ENCODE measurements at regions of chr2 and their contacts with region 1.

Region 1: GRCh38 chr2:177148477-177149154 is 64.0 kb upstream of the HNRNPA3 start:
- DNase-seq: peak; percentile 61 to 75
- ATAC-seq: peak; percentile 99
- H3K4me3 ChIP-seq: peak overlapping the region; percentile 48
- H3K27ac ChIP-seq: no peak overlapping the region
- H3K4me1 ChIP-seq: peaks cover 9% of the 10 kb centered on the region; the same call in 1 of the 3 replicates
- CTCF ChIP-seq: peak; percentile 85
- EP300 ChIP-seq: no peak
- POLR2A ChIP-seq: no peak
- RAD21 ChIP-seq: peak; percentile 63 to 68

Region 2: DNA sequence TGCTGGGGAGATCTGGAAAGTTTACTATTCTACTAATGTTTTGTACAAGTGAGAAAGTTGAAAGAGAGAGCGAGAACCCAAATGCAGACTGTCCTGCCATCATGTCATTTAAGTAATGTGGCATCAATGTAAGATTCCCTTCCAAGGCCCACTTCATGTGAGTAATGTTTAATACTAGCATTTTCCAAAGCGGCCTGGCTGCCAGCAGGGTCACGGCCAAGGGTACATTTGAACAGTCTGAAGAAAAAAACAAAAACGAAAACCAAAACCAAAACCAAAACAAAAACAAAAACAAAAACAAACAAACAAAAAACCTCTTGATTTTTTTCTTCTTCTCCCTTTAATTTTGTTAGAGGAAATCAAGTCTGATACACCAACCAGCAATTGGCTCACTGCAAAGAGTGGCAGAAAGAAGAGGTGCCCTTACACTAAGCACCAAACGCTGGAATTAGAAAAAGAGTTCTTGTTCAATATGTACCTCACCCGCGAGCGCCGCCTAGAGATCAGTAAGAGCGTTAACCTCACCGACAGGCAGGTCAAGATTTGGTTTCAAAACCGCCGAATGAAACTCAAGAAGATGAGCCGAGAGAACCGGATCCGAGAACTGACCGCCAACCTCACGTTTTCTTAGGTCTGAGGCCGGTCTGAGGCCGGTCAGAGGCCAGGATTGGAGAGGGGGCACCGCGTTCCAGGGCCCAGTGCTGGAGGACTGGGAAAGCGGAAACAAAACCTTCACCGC is 1029.8 kb before region 1 on chr2:
- CTCF ChIA-PET with region 1: interaction called, 12 read pairs
- POLR2A ChIA-PET with region 1: no interaction called
- DNase-seq: peak; percentile 63 to 79
- ATAC-seq: peak; percentile 31 to 46; a peak in 3 of 6 replicates
- H3K4me3 ChIP-seq: peak overlapping the region; percentile 30; the same call in 2 of the 3 replicates
- H3K27ac ChIP-seq: peak overlapping the region in 1 of 2 experiments; percentile 30; a peak in 1 of 6 replicates
- H3K4me1 ChIP-seq: 0 out of 3 replicates have a peak, but pooled peaks cover 3% of the 10 kb centered on the region
- CTCF ChIP-seq: peak; percentile 75
- EP300 ChIP-seq: no peak
- POLR2A ChIP-seq: no peak
- RAD21 ChIP-seq: peak; percentile 22; a peak in 1 of 5 replicates

Region 3: DNA sequence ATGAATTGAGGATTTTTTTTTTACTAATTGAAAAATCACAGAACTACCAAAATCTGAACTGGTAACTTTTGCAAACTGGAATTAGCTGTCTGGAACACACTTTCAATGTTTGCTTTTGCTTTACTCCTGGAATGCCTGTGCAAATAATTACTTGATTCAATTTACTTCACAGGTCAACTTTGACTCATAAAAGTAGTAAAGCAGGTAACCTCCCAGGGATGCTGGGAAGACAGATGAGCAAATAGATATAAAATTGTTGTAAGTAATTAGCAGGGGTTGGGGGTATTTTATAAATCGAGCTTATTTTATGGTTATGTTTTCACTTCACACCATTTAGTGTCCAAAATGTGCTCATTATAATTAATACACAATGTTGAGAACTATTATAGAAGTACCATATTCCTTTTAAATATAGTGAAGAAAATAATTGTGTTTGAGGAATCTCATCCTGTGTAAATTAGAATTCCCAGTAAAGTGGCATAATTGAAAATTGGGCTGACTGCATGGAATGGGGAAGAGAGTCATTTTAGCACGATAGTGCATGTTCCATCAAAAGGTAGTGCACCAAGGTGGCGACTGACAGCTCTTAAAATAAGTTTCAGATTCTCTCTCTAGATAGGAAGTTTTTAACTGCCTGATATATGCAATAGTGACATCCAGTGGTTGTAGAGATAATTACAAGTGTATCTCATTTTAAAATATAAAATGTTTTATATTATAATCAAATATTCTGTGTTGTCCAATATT is 334.1 kb before region 1 on chr2:
- CTCF ChIA-PET with region 1: interaction called, 11 read pairs
- POLR2A ChIA-PET with region 1: no interaction called
- DNase-seq: peak; percentile 10 to 37
- ATAC-seq: peak in 1 of 2 experiments; percentile 53; a peak in 3 of 6 replicates
- H3K4me3 ChIP-seq: no peak overlapping the region
- H3K27ac ChIP-seq: no peak overlapping the region
- H3K4me1 ChIP-seq: no peaks in the 10 kb centered on the region
- CTCF ChIP-seq: peak; percentile 59
- EP300 ChIP-seq: no peak
- POLR2A ChIP-seq: no peak
- RAD21 ChIP-seq: peak; percentile 66

Region 4: GRCh38 chr2:176978921-176979320 is 169.7 kb before region 1 on chr2:
- CTCF ChIA-PET with region 1: interaction called, 31 read pairs
- POLR2A ChIA-PET with region 1: no interaction called
- DNase-seq: peak in 1 of 2 experiments; percentile 24
- ATAC-seq: no peak
- H3K4me3 ChIP-seq: no peak overlapping the region
- H3K27ac ChIP-seq: no peak overlapping the region
- H3K4me1 ChIP-seq: no peaks in the 10 kb centered on the region
- CTCF ChIP-seq: peak; percentile 11; the same call in 1 of the 3 replicates
- EP300 ChIP-seq: no peak
- POLR2A ChIP-seq: no peak
- RAD21 ChIP-seq: peak; percentile 14 to 34; a peak in 2 of 5 replicates

Region 5: DNA sequence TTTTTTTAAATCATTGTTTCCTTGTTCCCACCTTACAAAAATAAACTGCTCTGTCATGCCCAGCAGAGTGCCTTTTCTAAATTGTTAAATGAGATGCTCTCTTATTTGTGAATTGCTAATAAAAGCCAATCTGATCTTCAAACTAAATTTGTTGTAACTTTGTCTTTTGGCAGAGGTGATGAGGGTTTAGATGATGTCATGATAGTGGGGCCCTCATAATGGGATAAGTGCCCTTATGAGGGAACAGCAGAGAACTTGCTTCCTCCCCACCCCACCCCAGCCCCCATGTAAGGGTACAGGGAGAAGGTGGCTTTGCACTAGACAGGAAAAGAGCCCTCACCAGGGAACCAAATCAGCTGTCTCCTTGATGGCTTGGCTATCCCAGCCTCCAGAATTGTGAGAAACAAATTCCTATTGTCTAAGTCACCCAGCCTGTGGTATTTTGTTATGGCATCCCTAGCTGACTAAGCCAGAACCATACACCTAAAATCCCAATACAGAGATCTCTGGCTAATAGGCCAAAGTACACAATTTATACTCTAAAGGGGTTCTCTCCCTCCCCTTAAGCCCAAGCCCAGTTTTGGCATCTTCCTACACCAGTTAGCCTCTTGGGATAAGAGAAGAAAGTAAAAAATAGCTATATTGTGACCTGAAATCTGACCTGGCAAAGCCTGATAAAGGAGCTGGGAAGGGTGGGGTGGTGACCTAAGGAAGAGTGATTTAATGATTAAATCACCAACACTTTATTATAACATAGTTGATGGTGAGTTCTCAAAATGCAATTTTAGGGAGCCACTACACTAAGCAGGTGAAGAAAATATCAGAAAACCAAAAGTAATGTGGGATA is 23.6 kb after region 1 on chr2:
- CTCF ChIA-PET with region 1: no interaction called
- POLR2A ChIA-PET with region 1: interaction called, 10 read pairs
- DNase-seq: peak; percentile 58
- ATAC-seq: peak; percentile 36 to 63; a peak in 4 of 6 replicates
- H3K4me3 ChIP-seq: no peak overlapping the region
- H3K27ac ChIP-seq: peak overlapping the region; percentile 24 to 80; a peak in 4 of 6 replicates
- H3K4me1 ChIP-seq: peaks cover 70% of the 10 kb centered on the region
- CTCF ChIP-seq: no peak
- EP300 ChIP-seq: no peak
- POLR2A ChIP-seq: no peak
- RAD21 ChIP-seq: no peak